HEK293T (cell line): ENCODE measurements at regions of chr22 and their contacts with region 1.

Region 1: DNA sequence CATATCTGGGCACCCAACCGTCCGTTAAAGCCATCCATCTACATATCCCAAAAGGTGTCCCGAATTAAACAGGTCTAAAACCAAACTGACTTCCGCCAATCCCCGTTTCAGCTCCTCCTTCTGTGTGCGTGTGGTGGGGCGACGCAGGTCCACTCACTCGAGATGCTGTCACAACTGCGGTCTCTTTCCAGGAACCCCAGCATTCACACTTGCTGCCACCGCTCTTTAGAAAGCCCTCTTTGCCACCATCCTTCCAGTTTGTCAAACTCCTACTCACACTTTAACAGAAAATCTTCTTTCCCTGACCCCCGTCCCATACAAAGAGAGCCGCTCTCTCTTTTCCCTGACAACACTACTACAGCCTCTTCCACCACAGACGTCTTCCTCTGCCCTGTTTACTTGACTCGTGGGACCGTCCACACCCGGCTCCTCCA is 467 bp downstream of the ESS2 start:
- DNase-seq: no peak

Region 2: DNA sequence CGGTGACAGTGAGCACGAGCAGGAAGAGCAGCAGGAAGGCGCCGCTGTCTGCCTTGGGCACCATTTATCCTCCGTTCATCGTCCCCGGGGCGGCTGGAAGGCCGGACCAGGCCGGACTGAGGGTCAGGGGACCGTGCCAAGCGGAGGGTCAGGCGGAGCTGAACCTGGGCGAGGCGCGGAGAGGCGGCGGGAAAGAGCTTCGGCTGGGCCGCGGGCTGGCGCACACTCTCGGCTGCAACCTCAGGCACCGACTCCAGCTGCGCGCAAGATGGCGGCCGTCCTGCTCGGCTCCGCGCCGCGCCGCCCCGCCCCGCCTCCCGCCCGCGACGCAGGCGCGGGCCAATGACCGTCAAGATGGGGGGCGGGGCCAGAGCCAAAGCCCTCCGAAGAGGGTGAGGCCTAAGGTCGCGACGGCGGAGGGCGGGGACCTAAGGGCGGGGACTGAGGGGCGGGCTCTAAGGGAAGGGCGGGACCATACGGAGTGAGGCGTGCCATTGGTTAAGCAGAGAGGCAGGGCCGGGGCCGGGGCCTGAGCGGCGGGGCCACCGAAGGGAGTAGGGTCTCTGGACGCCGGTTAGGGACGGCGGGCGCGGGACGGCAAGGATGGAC is 21.7 kb before region 1 on chr22 and contains the start of gene DGCR2:
- CTCF ChIA-PET with region 1: interaction called, 3 read pairs
- POLR2A ChIA-PET with region 1: interaction called, 27 read pairs
- DNase-seq: peak; percentile 100

Region 3: DNA sequence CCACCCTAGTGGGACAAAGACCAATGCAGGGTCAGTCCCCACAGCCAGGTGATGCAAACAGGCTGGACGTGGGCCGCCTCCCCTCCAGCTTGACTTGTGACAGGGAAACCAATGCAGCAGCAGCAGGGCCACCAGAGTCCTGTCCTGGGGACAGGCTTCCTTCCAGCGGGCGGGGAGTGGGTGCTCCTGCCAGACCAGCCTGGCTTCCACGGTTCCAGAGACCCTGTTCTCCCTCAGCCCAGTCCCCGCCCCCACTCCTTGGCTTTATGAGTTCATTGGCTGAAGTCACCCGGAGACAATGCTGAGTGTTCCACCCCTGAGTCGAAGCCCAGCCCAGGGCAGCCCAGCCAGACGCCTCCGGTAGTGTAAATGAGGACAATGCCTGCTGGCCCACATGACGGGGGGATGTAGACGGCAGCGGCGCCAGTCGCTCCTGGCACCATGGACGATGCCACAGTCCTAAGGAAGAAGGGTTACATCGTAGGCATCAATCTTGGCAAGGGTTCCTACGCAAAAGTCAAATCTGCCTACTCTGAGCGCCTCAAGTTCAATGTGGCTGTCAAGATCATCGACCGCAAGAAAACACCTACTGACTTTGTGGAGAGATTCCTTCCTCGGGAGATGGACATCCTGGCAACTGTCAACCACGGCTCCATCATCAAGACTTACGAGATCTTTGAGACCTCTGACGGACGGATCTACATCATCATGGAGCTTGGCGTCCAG is 12.9 kb before region 1 on chr22 and contains the start of gene TSSK2:
- CTCF ChIA-PET with region 1: interaction called, 6 read pairs
- POLR2A ChIA-PET with region 1: interaction called, 29 read pairs
- DNase-seq: no peak

Region 4: DNA sequence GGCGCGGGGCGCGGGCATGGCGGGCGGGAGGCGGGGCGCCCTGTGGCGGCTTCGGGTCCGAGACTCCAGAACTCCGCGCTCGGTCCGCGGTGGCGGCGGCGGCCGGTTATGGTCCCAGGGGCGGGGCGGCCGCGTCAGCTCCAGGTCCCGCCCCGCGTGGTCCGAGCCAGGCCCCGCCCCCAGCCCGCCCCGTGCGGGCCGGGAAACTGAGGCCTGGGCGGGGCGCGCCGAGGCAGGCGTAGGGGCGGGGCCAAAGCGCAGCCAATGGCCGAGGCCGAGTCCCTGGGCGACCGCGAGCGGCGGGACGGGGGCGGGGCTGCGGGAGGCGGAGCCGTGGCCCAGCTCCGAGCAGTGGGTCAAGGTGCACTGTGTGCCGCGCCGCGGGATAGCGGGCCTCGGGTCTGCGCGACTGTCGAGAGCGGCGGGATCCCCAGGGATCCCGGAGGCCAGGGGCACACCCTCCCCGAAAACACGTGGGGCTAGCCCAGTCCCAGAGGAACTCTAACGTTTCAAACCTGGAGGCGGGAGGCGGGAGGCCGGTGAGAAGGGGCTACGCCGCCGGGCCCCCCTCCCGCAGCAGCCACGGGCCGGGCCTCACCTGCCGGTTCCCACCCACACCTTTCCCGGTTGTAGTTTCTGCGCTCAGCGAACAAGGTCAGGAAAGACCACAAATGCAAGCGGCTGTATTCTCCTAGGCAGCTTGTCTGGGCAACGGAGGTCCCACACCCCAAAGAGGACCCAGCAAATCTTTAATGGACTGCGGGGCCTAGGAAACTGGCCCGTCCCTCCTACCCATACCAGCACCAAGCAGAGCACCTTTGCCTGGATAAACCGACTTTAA is 34.9 kb after region 1 on chr22 and contains the start of gene SLC25A1:
- CTCF ChIA-PET with region 1: interaction called, 4 read pairs
- POLR2A ChIA-PET with region 1: interaction called, 13 read pairs
- DNase-seq: peak; percentile 97

Region 5: GRCh38 chr22:19473578-19473977 is 329.6 kb after region 1 on chr22:
- CTCF ChIA-PET with region 1: no interaction called
- POLR2A ChIA-PET with region 1: no interaction called
- DNase-seq: no peak